Mucosa of descending colon (tissue), 3 donors: ENCODE measurements at regions of chr1 and their contacts with region 1.

Region 1: GRCh38 chr1:234499119-234499942 is 20.4 kb upstream of the TARBP1 start:
- DNase-seq: peak; percentile 92 to 96 (median 94)
- ATAC-seq: peak; percentile 99
- H3K4me3 ChIP-seq: no peak overlapping the region
- H3K4me1 ChIP-seq: peaks cover 19% of the 10 kb centered on the region
- CTCF ChIP-seq: peak; percentile 89

Region 2: GRCh38 chr1:234315091-234315541 is 184.2 kb before region 1 on chr1:
- intact Hi-C with region 1: no loop called
- DNase-seq: no peak
- ATAC-seq: no peak
- H3K4me3 ChIP-seq: no peak overlapping the region
- H3K4me1 ChIP-seq: no peaks in the 10 kb centered on the region
- CTCF ChIP-seq: no peak

Region 3: GRCh38 chr1:235087896-235088295 is 588.6 kb after region 1 on chr1:
- intact Hi-C with region 1: loop called (anchors 5 kb)
- DNase-seq: no peak
- ATAC-seq: no peak
- H3K4me3 ChIP-seq: no peak overlapping the region
- H3K4me1 ChIP-seq: peaks cover 10% of the 10 kb centered on the region
- CTCF ChIP-seq: no peak